GM10248 (cell line): ENCODE measurements at regions of chr6 and their contacts with region 1.

Region 1: DNA sequence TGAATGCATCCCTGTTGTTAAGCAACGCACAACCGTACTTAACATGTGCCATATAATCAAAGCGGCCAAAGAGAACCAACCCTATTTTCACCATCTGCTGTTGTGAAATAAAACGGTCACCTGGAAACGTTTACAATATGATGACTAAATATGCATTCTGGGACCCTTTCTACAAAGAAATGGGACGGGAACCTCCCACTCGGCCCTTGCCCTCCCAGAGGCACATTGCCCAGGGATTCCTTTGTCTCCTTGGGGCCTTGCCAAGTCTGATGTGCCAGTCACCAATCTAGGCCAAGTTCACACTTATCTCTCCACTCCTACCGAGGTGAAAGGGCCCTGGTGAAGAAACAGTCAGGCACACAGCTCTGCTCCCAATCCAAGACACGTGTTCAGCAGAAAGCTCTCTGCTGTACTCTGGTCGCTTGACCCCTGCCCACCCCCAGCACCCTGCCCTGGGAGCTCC is 427.4 kb upstream of the JARID2 start:
- DNase-seq: no peak
- CTCF ChIP-seq: no peak

Region 2: GRCh38 chr6:14831937-14832336 is 13.5 kb after region 1 on chr6:
- CTCF ChIA-PET with region 1: interaction called, 17 read pairs
- POLR2A ChIA-PET with region 1: no interaction called
- DNase-seq: no peak
- CTCF ChIP-seq: no peak